ENCODE measurements at regions of chr1 and their contacts with region 1.

Region 1: DNA sequence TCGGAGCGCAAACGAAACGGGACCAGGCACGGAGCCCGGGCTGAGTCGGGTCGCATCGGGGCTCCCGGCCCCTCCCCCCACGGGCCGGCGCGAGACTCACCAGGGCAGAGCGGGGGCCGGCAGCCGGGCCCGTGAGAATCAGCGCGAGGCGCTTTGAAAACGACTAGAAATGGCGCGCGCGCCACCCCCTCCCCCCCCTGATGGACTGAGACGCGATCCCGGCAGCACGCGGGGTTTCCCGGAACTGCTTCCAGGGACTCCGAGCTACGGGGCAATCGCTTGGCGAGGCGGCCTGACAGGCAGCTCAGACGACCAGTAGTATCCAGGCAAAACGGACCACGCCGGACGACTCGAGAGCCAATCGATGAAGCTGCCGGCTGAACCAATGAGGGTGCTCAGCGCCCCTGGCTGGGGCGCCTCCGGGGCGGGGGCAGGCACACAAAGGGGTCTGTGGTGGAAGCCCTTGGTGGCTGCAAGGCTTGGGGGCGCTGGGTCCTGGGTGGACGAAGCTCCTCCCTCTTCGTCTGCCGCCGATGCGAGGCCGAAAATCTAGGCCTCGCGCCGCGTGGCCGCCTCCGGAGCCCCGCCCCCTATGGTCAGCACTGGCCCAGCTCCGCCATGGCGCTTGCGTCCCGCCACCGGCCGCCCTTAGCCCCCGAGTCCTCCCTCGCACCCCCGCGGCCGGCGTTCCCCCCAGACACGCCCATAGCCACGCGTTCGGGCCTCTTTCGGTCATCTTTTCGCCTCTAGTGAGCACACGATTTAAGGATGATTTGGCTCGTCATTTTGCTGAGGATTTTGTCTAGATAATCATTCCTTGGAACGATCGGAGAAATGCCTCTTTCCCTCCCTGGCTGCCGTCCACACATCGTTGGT is at the start of gene HNRNPR:
- DNase-seq: peak; percentile 90 to 99 (median 97)
- ATAC-seq: peak; percentile 97
- H3K4me3 ChIP-seq: peak within 1 kb of the TSS; percentile 89
- H3K4me3 Mint-ChIP-seq: peak within 1 kb of the TSS; percentile 81 to 100 (median 94)
- H3K27ac ChIP-seq: peak within 1 kb of the TSS; percentile 83
- H3K27ac Mint-ChIP-seq: peak within 1 kb of the TSS; percentile 89 to 98 (median 97)
- H3K4me1 ChIP-seq: peaks cover 25 to 28% of the 10 kb centered on the region in 2 donors
- H3K4me1 Mint-ChIP-seq: peaks cover 34 to 47% (median 45%) of the 10 kb centered on the region in 7 donors
- H3K27me3 ChIP-seq: no peaks in the 10 kb centered on the region
- H3K27me3 Mint-ChIP-seq: no peaks in the 10 kb centered on the region
- total RNA-seq, gene HNRNPR: 97.4 to 235 (median 117) TPM

Region 2: GRCh38 chr1:23140940-23141596 is 203.3 kb before region 1 on chr1:
- CTCF ChIA-PET with region 1: no interaction called
- POLR2A ChIA-PET with region 1: no interaction called
- intact Hi-C with region 1: no loop called
- DNase-seq: no peak
- ATAC-seq: no peak
- H3K4me3 ChIP-seq: no peak overlapping the region
- H3K4me3 Mint-ChIP-seq: no peak overlapping the region
- H3K27ac ChIP-seq: no peak overlapping the region
- H3K27ac Mint-ChIP-seq: peak overlapping the region in 1 of 9 donors; percentile 25
- H3K4me1 ChIP-seq: peaks cover 0 to 4% of the 10 kb centered on the region in 2 donors
- H3K4me1 Mint-ChIP-seq: peaks cover 2 to 29% (median 7%) of the 10 kb centered on the region in 7 donors
- H3K27me3 ChIP-seq: no peaks in the 10 kb centered on the region
- H3K27me3 Mint-ChIP-seq: no peaks in the 10 kb centered on the region

Region 3: DNA sequence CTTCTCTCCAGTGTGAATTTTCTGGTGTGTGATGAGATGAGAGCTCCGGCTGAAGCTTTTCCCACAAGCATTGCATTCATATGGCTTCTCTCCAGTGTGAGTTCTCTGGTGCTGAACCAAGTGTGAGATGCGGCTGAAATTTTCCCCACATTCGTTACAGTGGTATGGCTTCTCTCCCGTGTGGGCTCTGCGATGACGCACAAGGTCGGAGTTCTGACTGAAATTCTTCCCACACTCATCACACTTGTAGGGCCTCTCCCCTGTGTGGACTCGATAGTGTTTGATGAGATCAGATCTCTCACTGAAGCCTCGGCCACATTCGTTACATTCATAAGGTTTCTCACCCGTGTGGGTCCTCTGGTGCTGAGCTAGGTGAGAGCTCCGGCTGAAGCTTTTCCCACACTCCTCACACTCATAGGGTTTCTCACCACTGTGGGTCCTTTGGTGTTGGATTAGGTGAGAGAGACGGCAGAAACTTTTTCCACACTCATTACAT is 17.9 kb after region 1 on chr1:
- CTCF ChIA-PET with region 1: no interaction called
- POLR2A ChIA-PET with region 1: interaction called, 62 read pairs
- intact Hi-C with region 1: no loop called
- DNase-seq: no peak
- ATAC-seq: no peak
- H3K4me3 ChIP-seq: no peak overlapping the region
- H3K4me3 Mint-ChIP-seq: no peak overlapping the region
- H3K27ac ChIP-seq: no peak overlapping the region
- H3K27ac Mint-ChIP-seq: no peak overlapping the region
- H3K4me1 ChIP-seq: peaks cover 2 to 3% of the 10 kb centered on the region in 2 donors
- H3K4me1 Mint-ChIP-seq: peaks cover 11 to 16% (median 15%) of the 10 kb centered on the region in 7 donors
- H3K27me3 ChIP-seq: no peaks in the 10 kb centered on the region
- H3K27me3 Mint-ChIP-seq: no peaks in the 10 kb centered on the region

Region 4: GRCh38 chr1:23384302-23385058 is 40.1 kb after region 1 on chr1:
- CTCF ChIA-PET with region 1: interaction called, 5 read pairs
- POLR2A ChIA-PET with region 1: interaction called, 3 read pairs
- intact Hi-C with region 1: loop called in 1 of 2 experiments (anchors 5 kb)
- DNase-seq: no peak
- ATAC-seq: no peak
- H3K4me3 ChIP-seq: no peak overlapping the region
- H3K4me3 Mint-ChIP-seq: no peak overlapping the region
- H3K27ac ChIP-seq: no peak overlapping the region
- H3K27ac Mint-ChIP-seq: peak overlapping the region in 2 of 9 donors; percentile 45 to 82
- H3K4me1 ChIP-seq: no peaks in the 10 kb centered on the region
- H3K4me1 Mint-ChIP-seq: peaks cover 0 to 4% (median 0%) of the 10 kb centered on the region in 7 donors
- H3K27me3 ChIP-seq: no peaks in the 10 kb centered on the region
- H3K27me3 Mint-ChIP-seq: no peaks in the 10 kb centered on the region

Region 5: GRCh38 chr1:23403735-23404486 is 59.6 kb after region 1 on chr1:
- CTCF ChIA-PET with region 1: interaction called, 6 read pairs
- POLR2A ChIA-PET with region 1: interaction called, 3 read pairs
- intact Hi-C with region 1: loop called (anchors 1 to 2 kb)
- DNase-seq: peak; percentile 62 to 83 (median 73)
- ATAC-seq: peak; percentile 92
- H3K4me3 ChIP-seq: no peak overlapping the region
- H3K4me3 Mint-ChIP-seq: no peak overlapping the region
- H3K27ac ChIP-seq: no peak overlapping the region
- H3K27ac Mint-ChIP-seq: peak overlapping the region in 5 of 9 donors; percentile 16 to 76 (median 51)
- H3K4me1 ChIP-seq: peaks cover 4 to 9% of the 10 kb centered on the region in 2 donors
- H3K4me1 Mint-ChIP-seq: peaks cover 10 to 14% (median 12%) of the 10 kb centered on the region in 7 donors
- H3K27me3 ChIP-seq: no peaks in the 10 kb centered on the region
- H3K27me3 Mint-ChIP-seq: no peaks in the 10 kb centered on the region

Region 6: GRCh38 chr1:23422241-23423030 is 78.1 kb after region 1 on chr1:
- CTCF ChIA-PET with region 1: no interaction called
- POLR2A ChIA-PET with region 1: interaction called, 9 read pairs
- intact Hi-C with region 1: loop called in 1 of 2 experiments (anchors 5 kb)
- DNase-seq: peak in 8 of 9 donors; percentile 40 to 73 (median 66)
- ATAC-seq: peak; percentile 74
- H3K4me3 ChIP-seq: peak overlapping the region; percentile 59
- H3K4me3 Mint-ChIP-seq: peak overlapping the region; percentile 74 to 96 (median 92)
- H3K27ac ChIP-seq: peak overlapping the region; percentile 65
- H3K27ac Mint-ChIP-seq: peak overlapping the region; percentile 58 to 96 (median 91)
- H3K4me1 ChIP-seq: peaks cover 10 to 20% of the 10 kb centered on the region in 2 donors
- H3K4me1 Mint-ChIP-seq: peaks cover 18 to 45% (median 37%) of the 10 kb centered on the region in 7 donors
- H3K27me3 ChIP-seq: no peaks in the 10 kb centered on the region
- H3K27me3 Mint-ChIP-seq: peaks cover 0 to 36% (median 0%) of the 10 kb centered on the region in 5 donors

Region 7: DNA sequence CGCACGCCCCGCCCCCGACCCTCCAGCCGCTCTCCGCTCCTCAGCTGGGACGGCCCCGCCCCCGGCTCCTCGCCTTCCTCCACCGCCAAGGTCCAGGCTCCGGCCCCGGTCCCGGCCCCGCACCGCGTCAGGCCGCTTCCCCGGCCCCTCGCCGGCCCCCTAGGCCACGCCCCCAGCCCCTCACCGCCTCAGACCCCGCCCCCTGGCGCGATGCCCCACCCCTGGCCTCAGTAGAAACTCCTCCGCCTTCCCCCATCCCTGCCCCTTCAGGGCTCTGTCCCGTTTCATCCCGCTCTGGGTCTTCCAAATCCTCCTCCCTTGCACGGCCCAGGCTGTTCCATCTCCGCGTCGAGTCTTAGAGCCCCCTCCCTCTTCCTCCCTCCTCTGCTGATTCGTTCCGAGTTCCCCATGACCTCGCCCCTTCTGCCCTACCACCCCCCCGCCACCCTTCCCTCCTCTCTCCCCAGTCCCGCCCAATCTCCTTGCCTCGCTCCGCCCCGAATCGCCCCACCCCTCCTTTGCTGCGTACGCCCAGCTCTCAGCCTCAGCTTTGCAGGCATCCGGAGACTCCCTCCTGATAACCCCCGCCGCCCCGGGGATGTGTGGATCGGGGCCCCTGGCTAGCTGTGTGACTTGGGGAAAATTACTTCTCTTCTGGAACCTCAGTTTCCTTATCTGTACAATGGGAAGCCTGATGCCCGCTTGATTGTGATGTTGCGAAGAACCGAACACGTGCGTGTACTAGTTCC is 140.1 kb after region 1 on chr1:
- CTCF ChIA-PET with region 1: no interaction called
- POLR2A ChIA-PET with region 1: interaction called, 6 read pairs
- intact Hi-C with region 1: loop called (anchors 1 kb)
- DNase-seq: peak; percentile 76 to 92 (median 90)
- ATAC-seq: peak; percentile 94
- H3K4me3 ChIP-seq: peak overlapping the region; percentile 67
- H3K4me3 Mint-ChIP-seq: peak overlapping the region; percentile 74 to 97 (median 88)
- H3K27ac ChIP-seq: peak overlapping the region; percentile 63
- H3K27ac Mint-ChIP-seq: peak overlapping the region; percentile 65 to 83 (median 76)
- H3K4me1 ChIP-seq: peaks cover 13% of the 10 kb centered on the region in 2 donors
- H3K4me1 Mint-ChIP-seq: peaks cover 12 to 20% (median 15%) of the 10 kb centered on the region in 7 donors
- H3K27me3 ChIP-seq: no peaks in the 10 kb centered on the region
- H3K27me3 Mint-ChIP-seq: peaks cover 0 to 73% (median 13%) of the 10 kb centered on the region in 5 donors

Region 8: GRCh38 chr1:23530747-23531561 is 186.6 kb after region 1 on chr1 and contains the start of gene E2F2:
- CTCF ChIA-PET with region 1: no interaction called
- POLR2A ChIA-PET with region 1: interaction called, 4 read pairs
- intact Hi-C with region 1: loop called (anchors 2 to 10 kb)
- DNase-seq: peak; percentile 61 to 81 (median 78)
- ATAC-seq: peak; percentile 83
- H3K4me3 ChIP-seq: peak within 1 kb of the TSS; percentile 52
- H3K4me3 Mint-ChIP-seq: peak within 1 kb of the TSS; percentile 85 to 97 (median 90)
- H3K27ac ChIP-seq: no peak within 1 kb of the TSS
- H3K27ac Mint-ChIP-seq: peak within 1 kb of the TSS in 7 of 9 donors; percentile 36 to 96 (median 70)
- H3K4me1 ChIP-seq: peaks cover 61 to 71% of the 10 kb centered on the region in 2 donors
- H3K4me1 Mint-ChIP-seq: peaks cover 49 to 76% (median 67%) of the 10 kb centered on the region in 7 donors
- H3K27me3 ChIP-seq: no peaks in the 10 kb centered on the region
- H3K27me3 Mint-ChIP-seq: peaks cover 0 to 4% (median 0%) of the 10 kb centered on the region in 5 donors
- total RNA-seq, gene E2F2: 0.14 to 65.7 (median 2.5) TPM in 4 of 5 experiments, not detected in the other

Region 9: DNA sequence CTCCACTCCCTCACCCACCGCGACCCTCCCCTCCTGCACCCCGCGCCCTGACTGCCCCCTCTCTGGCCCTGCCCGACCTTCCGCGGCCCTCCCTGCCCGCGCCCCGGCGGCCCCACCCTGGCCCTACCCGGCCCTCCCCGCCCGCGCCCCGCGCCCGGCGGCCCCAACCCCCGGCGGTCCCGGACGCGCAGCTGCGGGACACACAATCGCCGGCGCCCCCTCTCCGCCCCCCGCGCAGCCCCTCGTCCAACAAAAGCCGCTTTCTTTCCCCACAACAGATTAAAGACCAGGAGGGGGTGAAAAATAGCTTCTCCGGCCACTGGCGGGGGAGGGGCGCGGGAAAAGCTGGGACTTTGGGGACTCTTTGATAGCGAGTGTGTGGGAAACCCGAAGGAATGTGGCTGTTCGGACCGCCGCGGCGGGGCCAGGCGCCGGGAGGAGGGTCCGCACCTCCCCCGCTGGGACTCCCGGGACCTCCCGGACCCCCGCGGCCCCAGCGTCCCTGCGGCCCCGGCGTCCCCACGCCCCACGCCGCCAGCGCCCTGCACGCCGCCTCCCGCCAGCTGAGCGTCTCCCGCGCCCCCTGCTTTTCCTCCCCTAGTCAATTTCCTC is 223.8 kb after region 1 on chr1:
- CTCF ChIA-PET with region 1: no interaction called
- POLR2A ChIA-PET with region 1: no interaction called
- intact Hi-C with region 1: no loop called
- DNase-seq: no peak
- ATAC-seq: no peak
- H3K4me3 ChIP-seq: peak overlapping the region; percentile 37
- H3K4me3 Mint-ChIP-seq: peak overlapping the region; percentile 78 to 98 (median 94)
- H3K27ac ChIP-seq: no peak overlapping the region
- H3K27ac Mint-ChIP-seq: peak overlapping the region in 8 of 9 donors; percentile 15 to 96 (median 83)
- H3K4me1 ChIP-seq: peaks cover 0 to 4% of the 10 kb centered on the region in 2 donors
- H3K4me1 Mint-ChIP-seq: peaks cover 14 to 44% (median 36%) of the 10 kb centered on the region in 7 donors
- H3K27me3 ChIP-seq: no peaks in the 10 kb centered on the region
- H3K27me3 Mint-ChIP-seq: peaks cover 0 to 72% (median 6%) of the 10 kb centered on the region in 5 donors

Region 10: GRCh38 chr1:23651069-23651808 is 306.9 kb after region 1 on chr1:
- CTCF ChIA-PET with region 1: no interaction called
- POLR2A ChIA-PET with region 1: no interaction called
- intact Hi-C with region 1: no loop called
- DNase-seq: no peak
- ATAC-seq: no peak
- H3K4me3 ChIP-seq: no peak overlapping the region
- H3K4me3 Mint-ChIP-seq: no peak overlapping the region
- H3K27ac ChIP-seq: no peak overlapping the region
- H3K27ac Mint-ChIP-seq: no peak overlapping the region
- H3K4me1 ChIP-seq: no peaks in the 10 kb centered on the region
- H3K4me1 Mint-ChIP-seq: no peaks in the 10 kb centered on the region
- H3K27me3 ChIP-seq: no peaks in the 10 kb centered on the region
- H3K27me3 Mint-ChIP-seq: peaks cover 0 to 13% (median 0%) of the 10 kb centered on the region in 5 donors

Measured in naive thymus-derived CD4-positive, alpha-beta T cell (primary cell).